Heart left ventricle (tissue), 16 donors: ENCODE measurements at regions of chr10 and their contacts with region 1.

Region 1: DNA sequence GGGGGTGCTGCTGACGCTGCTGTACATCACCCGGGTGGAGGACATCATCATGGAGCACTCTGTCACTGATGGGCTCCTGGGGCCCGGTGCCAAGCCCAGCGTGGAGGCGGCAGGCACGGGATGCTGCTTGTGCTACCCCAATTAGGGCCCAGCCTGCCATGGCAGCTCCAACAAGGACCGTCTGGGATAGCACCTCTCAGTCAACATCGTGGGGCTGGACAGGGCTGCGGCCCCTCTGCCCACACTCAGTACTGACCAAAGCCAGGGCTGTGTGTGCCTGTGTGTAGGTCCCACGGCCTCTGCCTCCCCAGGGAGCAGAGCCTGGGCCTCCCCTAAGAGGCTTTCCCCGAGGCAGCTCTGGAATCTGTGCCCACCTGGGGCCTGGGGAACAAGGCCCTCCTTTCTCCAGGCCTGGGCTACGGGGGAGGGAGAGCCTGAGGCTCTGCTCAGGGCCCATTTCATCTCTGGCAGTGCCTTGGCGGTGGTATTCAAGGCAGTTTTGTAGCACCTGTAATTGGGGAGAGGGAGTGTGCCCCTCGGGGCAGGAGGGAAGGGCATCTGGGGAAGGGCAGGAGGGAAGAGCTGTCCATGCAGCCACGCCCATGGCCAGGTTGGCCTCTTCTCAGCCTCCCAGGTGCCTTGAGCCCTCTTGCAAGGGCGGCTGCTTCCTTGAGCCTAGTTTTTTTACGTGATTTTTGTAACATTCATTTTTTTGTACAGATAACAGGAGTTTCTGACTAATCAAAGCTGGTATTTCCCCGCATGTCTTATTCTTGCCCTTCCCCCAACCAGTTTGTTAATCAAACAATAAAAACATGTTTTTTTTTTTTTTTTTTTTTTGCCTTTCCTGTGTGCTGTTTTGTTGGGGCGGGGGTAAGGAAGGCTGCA is 55.8 kb downstream of the TSPAN15 start:
- DNase-seq: no peak
- ATAC-seq: peak in 3 of 4 donors; percentile 8 to 40 (median 19)
- H3K4me3 ChIP-seq: peak overlapping the region in 7 of 12 donors; percentile 21 to 43 (median 30)
- H3K27ac ChIP-seq: peak overlapping the region in 10 of 12 donors; percentile 11 to 74 (median 43)
- H3K4me1 ChIP-seq: peaks cover 0 to 13% (median 4%) of the 10 kb centered on the region in 12 donors
- H3K27me3 ChIP-seq: no peaks in the 10 kb centered on the region
- CTCF ChIP-seq: no peak
- POLR2A ChIP-seq: no peak

Region 2: DNA sequence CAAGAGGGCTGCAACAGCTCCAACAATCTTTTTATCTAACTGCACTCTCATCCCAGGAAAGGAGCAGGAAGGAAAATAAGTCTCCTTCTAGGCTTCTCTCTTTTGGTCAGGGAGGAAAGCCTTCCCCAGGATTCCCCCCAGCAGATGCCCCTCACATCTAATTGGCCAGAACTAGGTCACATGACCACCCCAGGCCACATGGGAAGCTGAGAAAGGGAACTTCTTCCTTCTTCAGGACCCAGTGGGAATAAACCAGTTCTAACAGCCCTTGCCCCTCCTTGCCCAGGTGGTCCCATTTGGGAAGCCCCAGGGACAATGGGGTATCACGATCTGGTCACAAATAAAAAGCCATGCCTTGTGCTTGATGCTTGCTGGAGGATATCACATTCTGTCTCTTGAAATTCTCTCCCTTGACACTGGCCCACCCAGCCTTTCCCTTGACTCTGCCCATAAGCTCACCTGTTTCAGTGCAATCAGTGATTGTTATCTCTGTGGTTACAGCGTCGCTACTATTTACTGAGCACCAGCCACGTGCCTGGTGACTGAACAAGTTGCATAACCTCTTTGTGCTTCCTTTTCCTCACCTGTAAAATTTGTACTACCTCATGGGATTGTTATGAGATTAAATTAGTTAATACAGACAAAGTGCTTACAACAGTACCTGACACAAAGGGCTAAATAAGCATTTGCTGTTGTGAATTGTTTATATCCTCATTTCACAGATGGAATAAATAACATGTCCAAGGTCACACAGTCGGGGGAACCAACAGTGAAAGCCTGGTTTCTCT is 81.4 kb before region 1 on chr10:
- intact Hi-C with region 1: loop called (anchors 1 to 5 kb)
- DNase-seq: no peak
- ATAC-seq: no peak
- H3K4me3 ChIP-seq: no peak overlapping the region
- H3K27ac ChIP-seq: peak overlapping the region in 1 of 12 donors; percentile 74
- H3K4me1 ChIP-seq: peaks cover 0 to 19% (median 0%) of the 10 kb centered on the region in 12 donors
- H3K27me3 ChIP-seq: no peaks in the 10 kb centered on the region
- CTCF ChIP-seq: no peak
- POLR2A ChIP-seq: no peak

Region 3: DNA sequence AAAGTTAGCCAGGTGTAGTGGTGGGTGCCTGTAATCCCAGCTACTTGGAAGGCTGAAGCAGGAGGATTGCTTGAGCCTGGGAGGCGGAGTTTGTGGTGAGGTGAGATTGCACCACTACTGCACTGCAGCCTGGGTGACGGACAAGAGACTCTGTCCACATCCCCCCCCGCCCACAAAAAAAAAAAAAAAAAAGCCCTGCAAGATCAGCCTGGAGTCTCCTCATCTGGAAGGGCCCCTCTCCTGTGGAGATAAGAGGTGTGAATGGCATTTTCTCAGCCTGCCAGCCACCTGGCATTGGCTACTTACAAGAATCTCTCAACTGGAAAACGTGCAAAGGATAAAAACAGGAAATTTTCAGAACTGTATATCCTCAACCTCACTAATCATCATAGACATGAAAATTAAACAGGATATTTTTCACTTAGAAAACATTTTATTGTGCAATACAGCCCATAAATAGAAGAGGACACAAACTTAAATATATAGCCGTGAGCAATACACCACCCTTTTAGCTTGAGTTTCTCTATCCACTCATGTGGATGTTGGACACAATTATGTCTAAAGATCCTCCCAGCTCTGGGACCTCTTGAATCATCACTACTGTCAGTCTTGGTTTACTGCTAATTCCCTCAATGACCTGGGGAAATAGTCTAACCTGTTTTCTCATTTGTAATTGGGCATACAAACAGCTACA is 67.1 kb before region 1 on chr10:
- intact Hi-C with region 1: loop called in 3 of 10 experiments (anchors 5 kb)
- DNase-seq: no peak
- ATAC-seq: no peak
- H3K4me3 ChIP-seq: no peak overlapping the region
- H3K27ac ChIP-seq: peak overlapping the region in 1 of 12 donors; percentile 40
- H3K4me1 ChIP-seq: peaks cover 0 to 21% (median 14%) of the 10 kb centered on the region in 12 donors
- H3K27me3 ChIP-seq: no peaks in the 10 kb centered on the region
- CTCF ChIP-seq: no peak
- POLR2A ChIP-seq: no peak

Region 4: DNA sequence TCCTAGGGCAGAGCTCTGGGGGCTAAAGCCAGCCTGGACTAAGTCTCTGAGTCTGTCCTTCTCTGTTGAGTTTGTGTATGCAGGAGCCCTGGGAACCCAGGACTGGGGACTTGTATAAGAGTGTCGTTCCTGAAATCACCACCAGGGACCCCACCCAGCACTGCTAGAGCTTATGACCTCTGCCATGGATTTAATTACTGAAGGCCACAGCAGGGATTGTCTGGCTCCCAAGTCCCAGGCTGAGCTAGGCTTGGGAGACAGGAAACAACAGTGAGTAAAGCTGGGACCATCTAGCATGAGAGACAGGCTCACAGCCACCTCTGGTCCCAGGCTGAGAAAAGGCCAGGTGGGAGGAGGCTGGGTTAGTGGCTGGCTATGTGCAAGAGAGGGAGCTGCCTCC is 57.2 kb before region 1 on chr10:
- intact Hi-C with region 1: loop called in 2 of 10 experiments (anchors 5 kb)
- DNase-seq: peak in 4 of 5 donors; percentile 56 to 69 (median 65)
- ATAC-seq: peak; percentile 53 to 83 (median 76)
- H3K4me3 ChIP-seq: no peak overlapping the region
- H3K27ac ChIP-seq: peak overlapping the region in 9 of 12 donors; percentile 18 to 91 (median 59)
- H3K4me1 ChIP-seq: peaks cover 0 to 42% (median 20%) of the 10 kb centered on the region in 12 donors
- H3K27me3 ChIP-seq: no peaks in the 10 kb centered on the region
- CTCF ChIP-seq: peak; percentile 47 to 73 (median 66)
- POLR2A ChIP-seq: no peak

Region 5: GRCh38 chr10:69835875-69836730 is 329.0 kb after region 1 on chr10:
- intact Hi-C with region 1: no loop called
- DNase-seq: no peak
- ATAC-seq: peak in 2 of 4 donors; percentile 35 to 47
- H3K4me3 ChIP-seq: no peak overlapping the region
- H3K27ac ChIP-seq: no peak overlapping the region
- H3K4me1 ChIP-seq: peaks cover 0 to 14% (median 0%) of the 10 kb centered on the region in 12 donors
- H3K27me3 ChIP-seq: no peaks in the 10 kb centered on the region
- CTCF ChIP-seq: no peak
- POLR2A ChIP-seq: no peak